Sigmoid colon (tissue), 7 donors: ENCODE measurements at regions of chr9 and their contacts with region 1.

Region 1: DNA sequence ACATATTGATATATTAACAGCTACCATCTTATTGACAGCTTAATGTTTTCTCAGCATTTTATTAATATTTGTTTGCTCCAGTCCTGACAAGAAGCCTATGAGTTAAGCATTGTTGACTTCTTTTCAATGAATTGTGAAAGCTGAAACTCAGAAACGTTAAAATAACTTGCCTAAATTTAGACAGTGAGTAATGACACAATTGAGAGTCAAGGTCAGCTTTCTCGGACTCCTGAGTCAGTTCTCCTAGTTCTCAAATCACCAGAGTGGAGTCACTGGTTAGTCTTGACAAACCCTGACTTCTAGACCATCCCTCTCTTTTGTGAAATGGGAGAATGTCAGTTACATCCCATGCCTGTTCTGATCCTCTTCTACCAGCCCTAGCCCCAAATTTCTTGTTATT is 222.7 kb upstream of the ACO1 start:
- DNase-seq: no peak
- H3K4me3 ChIP-seq: no peak overlapping the region
- H3K27ac ChIP-seq: no peak overlapping the region
- H3K4me1 ChIP-seq: no peaks in the 10 kb centered on the region
- H3K27me3 ChIP-seq: no peaks in the 10 kb centered on the region
- CTCF ChIP-seq: no peak
- EP300 ChIP-seq: no peak
- POLR2A ChIP-seq: no peak

Region 2: DNA sequence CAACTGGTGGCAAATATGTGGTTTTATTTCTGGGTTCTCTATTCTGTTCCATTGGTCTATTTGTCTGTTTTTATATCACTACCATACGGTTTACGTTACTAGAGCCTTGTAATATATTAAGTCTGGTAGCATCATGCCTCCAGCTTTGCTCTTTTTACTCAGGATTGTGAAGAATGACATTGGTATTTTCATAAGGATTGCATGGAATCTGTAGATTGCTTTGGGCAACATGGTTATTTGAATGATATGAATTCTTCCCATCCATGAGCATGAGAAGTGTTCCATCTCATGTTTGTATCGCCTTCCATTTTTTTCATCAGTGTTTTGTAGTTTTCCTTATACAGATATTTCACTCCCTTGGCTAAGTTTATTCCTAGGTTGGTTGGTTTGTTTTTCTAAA is 35.0 kb after region 1 on chr9:
- intact Hi-C with region 1: loop called (anchors 5 kb)
- DNase-seq: no peak
- H3K4me3 ChIP-seq: no peak overlapping the region
- H3K27ac ChIP-seq: no peak overlapping the region
- H3K4me1 ChIP-seq: no peaks in the 10 kb centered on the region
- H3K27me3 ChIP-seq: no peaks in the 10 kb centered on the region
- CTCF ChIP-seq: no peak
- EP300 ChIP-seq: no peak
- POLR2A ChIP-seq: no peak